CD8-positive, alpha-beta T cell (primary cell): ENCODE measurements at regions of chr4 and their contacts with region 1.

Region 1: GRCh38 chr4:80184053-80184790 is 13.1 kb upstream of the PRDM8 start:
- DNase-seq: peak; percentile 88 to 96 (median 92)
- ATAC-seq: peak; percentile 84
- H3K4me3 ChIP-seq: peak overlapping the region; percentile 75 to 87
- H3K4me3 Mint-ChIP-seq: peak overlapping the region; percentile 99
- H3K27ac ChIP-seq: peak overlapping the region; percentile 60 to 69
- H3K27ac Mint-ChIP-seq: peak overlapping the region; percentile 94
- H3K4me1 ChIP-seq: peaks cover 34% of the 10 kb centered on the region
- H3K4me1 Mint-ChIP-seq: peaks cover 50% of the 10 kb centered on the region
- H3K27me3 ChIP-seq: peaks cover 0 to 3% of the 10 kb centered on the region in 2 experiments
- H3K27me3 Mint-ChIP-seq: peaks cover 4% of the 10 kb centered on the region
- CTCF ChIP-seq: peak; percentile 98

Region 2: GRCh38 chr4:78764498-78764961 is 1419.7 kb before region 1 on chr4:
- CTCF ChIA-PET with region 1: no interaction called
- POLR2A ChIA-PET with region 1: no interaction called
- intact Hi-C with region 1: no loop called
- DNase-seq: no peak
- ATAC-seq: no peak
- H3K4me3 ChIP-seq: no peak overlapping the region
- H3K4me3 Mint-ChIP-seq: no peak overlapping the region
- H3K27ac ChIP-seq: no peak overlapping the region
- H3K27ac Mint-ChIP-seq: no peak overlapping the region
- H3K4me1 ChIP-seq: no peaks in the 10 kb centered on the region
- H3K4me1 Mint-ChIP-seq: no peaks in the 10 kb centered on the region
- H3K27me3 ChIP-seq: no peaks in the 10 kb centered on the region
- H3K27me3 Mint-ChIP-seq: peaks cover 2% of the 10 kb centered on the region
- CTCF ChIP-seq: no peak

Region 3: DNA sequence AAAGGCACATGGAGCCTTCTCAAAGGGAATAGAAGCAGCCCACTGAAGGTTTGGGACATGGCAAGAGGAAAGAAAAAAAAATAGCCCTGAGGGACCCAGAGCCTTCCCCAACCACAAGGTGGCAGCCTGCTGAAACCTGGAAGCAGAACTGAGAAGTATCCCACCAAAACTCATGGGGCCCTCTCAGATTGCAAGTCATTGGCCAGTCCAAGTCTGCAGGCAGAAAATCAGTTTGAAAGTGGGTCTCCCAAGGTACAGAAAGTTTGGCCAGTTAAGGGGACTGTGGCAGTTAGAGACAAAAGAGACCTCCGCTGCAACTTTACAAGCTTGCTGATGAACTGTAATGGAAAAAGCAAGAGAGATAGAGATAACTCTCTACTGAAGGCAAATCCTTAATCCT is 267.0 kb before region 1 on chr4:
- CTCF ChIA-PET with region 1: interaction called, 4 read pairs
- POLR2A ChIA-PET with region 1: no interaction called
- intact Hi-C with region 1: loop called in 1 of 2 experiments (anchors 1 kb)
- DNase-seq: peak; percentile 3 to 63 (median 43)
- ATAC-seq: peak; percentile 42
- H3K4me3 ChIP-seq: no peak overlapping the region
- H3K4me3 Mint-ChIP-seq: no peak overlapping the region
- H3K27ac ChIP-seq: no peak overlapping the region
- H3K27ac Mint-ChIP-seq: no peak overlapping the region
- H3K4me1 ChIP-seq: peaks cover 3% of the 10 kb centered on the region
- H3K4me1 Mint-ChIP-seq: peaks cover 4% of the 10 kb centered on the region
- H3K27me3 ChIP-seq: no peaks in the 10 kb centered on the region
- H3K27me3 Mint-ChIP-seq: no peaks in the 10 kb centered on the region
- CTCF ChIP-seq: peak; percentile 51

Region 4: GRCh38 chr4:80072744-80073472 is 111.3 kb before region 1 on chr4 and contains the start of gene ANTXR2:
- CTCF ChIA-PET with region 1: interaction called, 8 read pairs
- POLR2A ChIA-PET with region 1: interaction called, 15 read pairs
- intact Hi-C with region 1: loop called (anchors 1 to 5 kb)
- DNase-seq: peak; percentile 35 to 82 (median 70)
- ATAC-seq: peak; percentile 77
- H3K4me3 ChIP-seq: peak within 1 kb of the TSS; percentile 79 to 80
- H3K4me3 Mint-ChIP-seq: peak within 1 kb of the TSS; percentile 97
- H3K27ac ChIP-seq: peak within 1 kb of the TSS; percentile 69 to 70
- H3K27ac Mint-ChIP-seq: peak within 1 kb of the TSS; percentile 96
- H3K4me1 ChIP-seq: peaks cover 30% of the 10 kb centered on the region
- H3K4me1 Mint-ChIP-seq: peaks cover 53% of the 10 kb centered on the region
- H3K27me3 ChIP-seq: no peaks in the 10 kb centered on the region
- H3K27me3 Mint-ChIP-seq: no peaks in the 10 kb centered on the region
- CTCF ChIP-seq: no peak
- total RNA-seq, gene ANTXR2: 6.9 to 8.6 TPM

Region 5: GRCh38 chr4:80125252-80126177 is 58.7 kb before region 1 on chr4:
- CTCF ChIA-PET with region 1: interaction called, 222 read pairs
- POLR2A ChIA-PET with region 1: interaction called, 26 read pairs
- intact Hi-C with region 1: loop called (anchors 1 kb)
- DNase-seq: peak in 8 of 9 experiments; percentile 17 to 83 (median 42)
- ATAC-seq: peak; percentile 81
- H3K4me3 ChIP-seq: no peak overlapping the region
- H3K4me3 Mint-ChIP-seq: peak overlapping the region; percentile 44
- H3K27ac ChIP-seq: peak overlapping the region; percentile 56 to 84
- H3K27ac Mint-ChIP-seq: peak overlapping the region; percentile 83
- H3K4me1 ChIP-seq: peaks cover 37% of the 10 kb centered on the region
- H3K4me1 Mint-ChIP-seq: peaks cover 49% of the 10 kb centered on the region
- H3K27me3 ChIP-seq: no peaks in the 10 kb centered on the region
- H3K27me3 Mint-ChIP-seq: no peaks in the 10 kb centered on the region
- CTCF ChIP-seq: peak; percentile 72

Region 6: GRCh38 chr4:80173401-80173800 is 10.8 kb before region 1 on chr4:
- CTCF ChIA-PET with region 1: interaction called, 49 read pairs
- POLR2A ChIA-PET with region 1: interaction called, 33 read pairs
- intact Hi-C with region 1: loop called in 1 of 2 experiments (anchors 1 kb)
- DNase-seq: peak in 8 of 9 experiments; percentile 34 to 89 (median 62)
- ATAC-seq: peak; percentile 96
- H3K4me3 ChIP-seq: peak overlapping the region in 1 of 2 experiments; percentile 1
- H3K4me3 Mint-ChIP-seq: peak overlapping the region; percentile 36
- H3K27ac ChIP-seq: peak overlapping the region; percentile 3 to 68
- H3K27ac Mint-ChIP-seq: peak overlapping the region; percentile 95
- H3K4me1 ChIP-seq: peaks cover 33% of the 10 kb centered on the region
- H3K4me1 Mint-ChIP-seq: peaks cover 55% of the 10 kb centered on the region
- H3K27me3 ChIP-seq: no peaks in the 10 kb centered on the region
- H3K27me3 Mint-ChIP-seq: no peaks in the 10 kb centered on the region
- CTCF ChIP-seq: no peak

Region 7: DNA sequence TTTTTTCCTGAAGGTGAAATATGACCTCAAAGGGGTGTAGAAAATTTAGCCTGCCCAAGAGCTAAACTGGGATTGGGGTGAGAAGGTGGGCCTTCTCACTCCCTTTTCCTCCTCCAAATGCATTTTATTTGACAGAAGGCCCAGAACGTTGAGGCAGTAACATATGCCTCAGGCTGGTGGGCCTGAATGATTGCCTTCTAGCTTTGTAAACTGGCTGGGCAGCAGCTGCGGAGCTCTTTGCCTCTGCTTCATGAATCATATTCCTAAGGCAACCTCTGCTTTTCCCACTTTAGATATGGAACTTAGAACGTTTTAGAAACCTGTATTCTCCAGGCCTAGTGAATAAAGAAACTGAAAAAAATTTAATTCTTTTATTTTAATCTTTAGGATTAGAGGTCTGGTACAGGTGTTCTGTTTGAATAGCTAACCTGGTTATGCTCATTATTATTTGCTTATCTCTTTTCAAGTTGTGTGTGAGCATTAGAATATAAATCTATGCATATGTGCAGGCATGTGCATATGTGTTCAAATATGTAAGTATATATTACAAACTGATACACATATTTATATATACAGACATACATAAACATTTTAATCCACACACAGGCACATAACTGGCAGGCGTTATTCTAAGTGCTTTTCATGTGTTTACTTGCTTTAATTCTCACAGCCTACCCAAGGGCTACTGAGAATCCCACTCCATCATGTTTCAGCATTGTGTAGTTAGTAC is 24.6 kb after region 1 on chr4:
- CTCF ChIA-PET with region 1: interaction called, 158 read pairs
- POLR2A ChIA-PET with region 1: no interaction called
- intact Hi-C with region 1: loop called in 1 of 2 experiments (anchors 2 kb)
- DNase-seq: no peak
- ATAC-seq: no peak
- H3K4me3 ChIP-seq: no peak overlapping the region
- H3K4me3 Mint-ChIP-seq: no peak overlapping the region
- H3K27ac ChIP-seq: no peak overlapping the region
- H3K27ac Mint-ChIP-seq: no peak overlapping the region
- H3K4me1 ChIP-seq: no peaks in the 10 kb centered on the region
- H3K4me1 Mint-ChIP-seq: peaks cover under 1% of the 10 kb centered on the region
- H3K27me3 ChIP-seq: peaks cover 0 to 7% of the 10 kb centered on the region in 2 experiments
- H3K27me3 Mint-ChIP-seq: peaks cover 20% of the 10 kb centered on the region
- CTCF ChIP-seq: no peak